Esophagus squamous epithelium (tissue), 5 donors: ENCODE measurements at regions of chr2 and their contacts with region 1.

Region 1: DNA sequence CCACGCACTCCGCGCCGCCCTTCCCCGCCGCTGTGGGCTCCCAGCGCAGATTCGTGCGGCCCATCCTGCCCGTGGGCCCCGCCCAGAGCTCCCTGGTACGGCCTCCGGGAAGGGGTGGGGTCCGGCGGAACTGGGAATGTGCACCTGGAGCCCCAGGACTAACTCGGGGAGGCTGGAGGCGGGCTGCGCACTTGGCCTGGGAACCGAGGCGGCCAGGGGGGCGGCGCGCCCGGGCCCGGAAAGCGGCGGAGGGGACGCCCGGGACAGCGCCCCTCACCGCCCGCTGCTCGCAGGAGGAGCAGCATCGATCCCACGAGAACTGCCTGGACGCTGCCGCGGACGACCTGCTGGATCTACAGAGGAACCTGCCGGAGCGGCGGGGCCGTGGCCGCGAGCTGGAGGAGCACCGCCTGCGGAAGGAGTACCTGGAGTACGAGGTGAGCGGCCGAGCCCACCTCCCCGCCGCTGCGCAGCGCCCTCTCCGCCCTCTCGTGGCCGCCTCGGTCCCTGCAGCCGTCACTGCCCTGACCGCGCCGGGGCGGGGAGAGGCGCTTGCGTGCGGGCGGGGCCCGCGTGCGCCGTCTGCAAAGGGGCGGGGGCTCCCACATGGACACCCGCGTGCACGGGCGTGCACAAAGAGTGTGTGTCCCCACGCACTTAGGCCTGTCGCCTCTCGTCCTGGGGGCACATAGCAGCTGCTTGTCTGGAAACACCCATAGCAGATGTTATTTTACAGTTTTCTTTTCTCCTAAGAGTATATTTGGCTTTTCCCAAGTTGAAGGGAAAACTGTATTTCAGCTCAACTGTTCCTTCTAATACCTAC is 25.2 kb downstream of the PSD4 start:
- DNase-seq: no peak
- H3K4me3 ChIP-seq: peak overlapping the region; percentile 61 to 87 (median 69)
- H3K27ac ChIP-seq: peak overlapping the region; percentile 92 to 95 (median 93)
- H3K4me1 ChIP-seq: peaks cover 11 to 48% (median 19%) of the 10 kb centered on the region in 3 donors
- H3K27me3 ChIP-seq: no peaks in the 10 kb centered on the region
- CTCF ChIP-seq: peak; percentile 73 to 99 (median 98)
- POLR2A ChIP-seq: peak in 3 of 4 donors; percentile 24 to 45 (median 39)

Region 2: DNA sequence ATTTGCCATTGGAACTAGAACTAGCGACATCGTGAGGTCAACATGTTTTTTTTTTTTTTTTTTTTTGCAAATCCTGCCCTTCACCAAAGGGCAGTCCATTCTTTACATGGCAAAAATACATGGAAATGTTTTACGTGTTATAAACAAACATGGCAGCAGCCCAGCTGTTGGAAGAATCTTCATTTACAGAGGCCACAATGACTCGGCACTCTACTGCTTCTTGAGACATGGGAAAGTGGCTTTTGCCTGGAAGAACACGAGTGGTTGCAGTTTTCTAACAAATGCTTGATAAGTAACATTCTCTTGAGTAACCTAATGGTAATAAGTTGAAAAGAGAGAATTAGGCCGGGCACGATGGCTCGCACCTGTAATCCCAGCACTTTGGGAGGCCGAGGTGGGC is 679.5 kb before region 1 on chr2:
- intact Hi-C with region 1: no loop called
- DNase-seq: no peak
- H3K4me3 ChIP-seq: no peak overlapping the region
- H3K27ac ChIP-seq: no peak overlapping the region
- H3K4me1 ChIP-seq: no peaks in the 10 kb centered on the region
- H3K27me3 ChIP-seq: no peaks in the 10 kb centered on the region
- CTCF ChIP-seq: no peak
- POLR2A ChIP-seq: no peak

Region 3: DNA sequence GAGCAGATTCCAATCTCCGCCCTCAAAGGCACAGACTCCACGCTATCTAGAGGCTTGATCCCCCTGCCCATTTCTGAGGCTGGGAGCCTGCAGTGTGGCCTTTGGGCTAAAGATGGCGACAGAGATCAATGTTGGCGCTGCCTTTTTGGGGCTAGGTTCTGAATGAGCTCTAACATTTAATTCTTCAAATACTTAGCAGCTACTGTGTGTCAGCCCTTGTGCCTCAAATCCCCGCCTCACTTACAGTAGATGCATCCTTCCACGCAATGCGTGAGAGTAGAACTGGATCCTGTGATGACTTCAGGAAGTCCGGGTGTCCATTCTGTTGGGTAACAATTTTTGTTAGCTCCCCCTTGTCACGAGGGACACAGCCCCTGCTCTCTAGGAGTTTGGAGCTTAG is 118.9 kb before region 1 on chr2:
- intact Hi-C with region 1: loop called (anchors 5 kb)
- DNase-seq: no peak
- H3K4me3 ChIP-seq: no peak overlapping the region
- H3K27ac ChIP-seq: peak overlapping the region in 3 of 4 donors; percentile 78 to 94 (median 81)
- H3K4me1 ChIP-seq: peaks cover 5 to 62% (median 12%) of the 10 kb centered on the region in 3 donors
- H3K27me3 ChIP-seq: no peaks in the 10 kb centered on the region
- CTCF ChIP-seq: peak in 5 of 6 experiments; percentile 53 to 86 (median 64)
- POLR2A ChIP-seq: no peak

Region 4: GRCh38 chr2:113148606-113149560 is 50.1 kb before region 1 on chr2:
- intact Hi-C with region 1: loop called (anchors 10 kb)
- DNase-seq: no peak
- H3K4me3 ChIP-seq: no peak overlapping the region
- H3K27ac ChIP-seq: no peak overlapping the region
- H3K4me1 ChIP-seq: no peaks in the 10 kb centered on the region
- H3K27me3 ChIP-seq: no peaks in the 10 kb centered on the region
- CTCF ChIP-seq: no peak
- POLR2A ChIP-seq: no peak

Region 5: GRCh38 chr2:113716291-113716690 is 517.3 kb after region 1 on chr2:
- intact Hi-C with region 1: no loop called
- DNase-seq: no peak
- H3K4me3 ChIP-seq: no peak overlapping the region
- H3K27ac ChIP-seq: no peak overlapping the region
- H3K4me1 ChIP-seq: no peaks in the 10 kb centered on the region
- H3K27me3 ChIP-seq: no peaks in the 10 kb centered on the region
- CTCF ChIP-seq: no peak
- POLR2A ChIP-seq: no peak